CD4-positive, alpha-beta memory T cell (primary cell): ENCODE measurements at regions of chr5 and their contacts with region 1.

Region 1: DNA sequence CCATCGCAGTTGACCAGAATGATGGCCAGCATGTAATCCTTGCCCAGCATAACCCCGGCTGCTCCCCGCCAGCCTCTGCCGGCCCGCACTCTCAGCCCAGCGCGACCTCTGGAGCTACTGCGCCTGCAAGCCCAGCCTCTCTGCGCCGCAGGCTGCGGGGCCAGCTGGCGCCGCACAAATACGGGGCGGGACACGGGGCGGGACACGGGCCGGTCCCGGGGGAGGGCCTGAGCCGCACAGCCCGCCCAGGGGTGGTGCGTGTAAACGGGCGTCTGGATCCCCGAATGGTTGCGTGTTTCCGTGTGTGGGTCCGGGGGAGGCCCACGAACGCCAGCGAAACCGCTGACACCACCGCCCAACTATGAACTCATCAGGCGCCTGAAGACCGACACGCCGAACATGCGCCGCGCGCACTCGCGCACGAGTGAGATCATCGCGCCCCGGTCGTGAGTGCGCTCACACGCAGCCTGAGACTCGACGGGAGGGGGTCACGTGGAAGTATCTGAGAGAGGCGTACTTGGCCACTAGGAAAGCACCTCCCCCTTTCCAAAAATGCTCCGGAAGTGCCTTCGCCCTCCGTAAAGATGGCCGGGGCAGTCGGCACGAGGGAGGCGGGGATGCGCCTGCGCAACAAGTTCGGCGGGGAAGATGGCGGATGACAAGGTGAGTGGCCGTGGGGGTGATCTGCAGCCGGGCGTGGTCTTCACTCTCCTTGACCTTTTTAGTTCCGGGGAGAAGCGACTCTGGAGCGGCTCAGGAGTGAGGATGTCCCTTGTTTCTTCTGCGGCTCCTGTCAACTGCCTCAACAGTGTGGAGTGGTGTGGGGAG is at the starts of genes APBB3 and SLC35A4:
- DNase-seq: peak; percentile 97 to 100 (median 99)
- H3K4me3 ChIP-seq: peak within 1 kb of the TSS; percentile 85
- H3K4me3 Mint-ChIP-seq: peak within 1 kb of the TSS; percentile 91 to 99 (median 95)
- H3K27ac ChIP-seq: peak within 1 kb of the TSS; percentile 91
- H3K27ac Mint-ChIP-seq: peak within 1 kb of the TSS; percentile 91 to 100 (median 98)
- H3K4me1 ChIP-seq: peaks cover 42% of the 10 kb centered on the region
- H3K4me1 Mint-ChIP-seq: peaks cover 34 to 66% (median 53%) of the 10 kb centered on the region in 4 donors
- H3K27me3 ChIP-seq: no peaks in the 10 kb centered on the region
- H3K27me3 Mint-ChIP-seq: no peaks in the 10 kb centered on the region
- total RNA-seq, gene APBB3: 72.9 to 75.4 TPM
- total RNA-seq, gene SLC35A4: 49.0 to 59.4 TPM

Region 2: GRCh38 chr5:139593716-139594319 is 970.6 kb before region 1 on chr5:
- CTCF ChIA-PET with region 1: no interaction called
- POLR2A ChIA-PET with region 1: no interaction called
- intact Hi-C with region 1: no loop called
- DNase-seq: no peak
- H3K4me3 ChIP-seq: no peak overlapping the region
- H3K4me3 Mint-ChIP-seq: no peak overlapping the region
- H3K27ac ChIP-seq: no peak overlapping the region
- H3K27ac Mint-ChIP-seq: peak overlapping the region in 2 of 7 donors; percentile 27 to 32
- H3K4me1 ChIP-seq: peaks cover 47% of the 10 kb centered on the region
- H3K4me1 Mint-ChIP-seq: peaks cover 21 to 70% (median 41%) of the 10 kb centered on the region in 4 donors
- H3K27me3 ChIP-seq: no peaks in the 10 kb centered on the region
- H3K27me3 Mint-ChIP-seq: no peaks in the 10 kb centered on the region

Region 3: DNA sequence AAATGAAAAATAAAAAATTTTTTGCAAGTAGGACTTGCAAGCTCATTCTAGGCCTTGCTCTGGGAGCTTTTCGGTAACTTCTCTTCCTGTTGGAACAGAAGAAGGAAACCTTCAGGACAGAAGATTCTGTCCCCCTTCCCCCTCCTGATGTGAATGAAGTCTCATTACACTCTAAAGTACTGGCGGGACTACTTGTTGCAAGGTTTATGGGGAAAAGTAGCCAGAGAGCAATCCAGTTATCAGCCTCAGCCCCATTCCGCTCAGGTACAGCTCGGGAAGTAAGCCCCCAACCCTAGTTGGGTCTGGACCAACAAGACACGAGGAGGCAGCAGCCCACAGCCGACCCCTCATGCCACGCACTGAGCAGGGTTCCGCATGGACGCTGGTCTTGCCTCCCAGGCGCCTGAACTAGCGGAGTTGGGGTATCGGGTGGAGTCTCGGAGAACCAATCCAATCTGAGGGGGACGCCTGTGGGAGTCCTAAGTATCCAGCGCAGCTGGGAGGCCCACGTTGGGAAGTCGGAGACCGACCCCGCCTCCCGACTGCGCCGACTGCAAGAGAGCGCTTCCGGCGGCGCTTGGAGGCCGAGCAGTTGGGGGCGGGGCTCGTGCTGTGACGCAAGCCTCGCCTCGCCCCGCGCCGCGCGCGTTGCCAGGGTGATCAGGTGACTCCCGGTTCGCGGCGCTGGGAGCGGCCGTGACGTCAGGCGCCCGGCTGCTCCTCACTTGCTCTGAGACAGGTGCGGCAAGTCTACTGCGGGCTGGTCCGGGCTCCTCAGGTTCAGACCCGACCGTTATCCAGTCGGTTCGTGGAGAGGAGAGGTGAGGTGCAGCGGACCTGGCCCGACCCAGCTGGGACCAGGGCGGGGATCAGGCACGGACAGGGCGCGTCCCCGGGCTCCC is 389.7 kb before region 1 on chr5 and contains the start of gene CYSTM1:
- CTCF ChIA-PET with region 1: no interaction called
- POLR2A ChIA-PET with region 1: no interaction called
- intact Hi-C with region 1: loop called (anchors 2 kb)
- DNase-seq: peak; percentile 94 to 98 (median 97)
- H3K4me3 ChIP-seq: peak within 1 kb of the TSS; percentile 74 to 77
- H3K4me3 Mint-ChIP-seq: peak within 1 kb of the TSS; percentile 91 to 97 (median 93)
- H3K27ac ChIP-seq: peak within 1 kb of the TSS; percentile 89
- H3K27ac Mint-ChIP-seq: peak within 1 kb of the TSS; percentile 92 to 99 (median 98)
- H3K4me1 ChIP-seq: peaks cover 12% of the 10 kb centered on the region
- H3K4me1 Mint-ChIP-seq: peaks cover 7 to 23% (median 11%) of the 10 kb centered on the region in 4 donors
- H3K27me3 ChIP-seq: no peaks in the 10 kb centered on the region
- H3K27me3 Mint-ChIP-seq: no peaks in the 10 kb centered on the region
- total RNA-seq, gene CYSTM1: 5.0 to 6.3 TPM

Region 4: DNA sequence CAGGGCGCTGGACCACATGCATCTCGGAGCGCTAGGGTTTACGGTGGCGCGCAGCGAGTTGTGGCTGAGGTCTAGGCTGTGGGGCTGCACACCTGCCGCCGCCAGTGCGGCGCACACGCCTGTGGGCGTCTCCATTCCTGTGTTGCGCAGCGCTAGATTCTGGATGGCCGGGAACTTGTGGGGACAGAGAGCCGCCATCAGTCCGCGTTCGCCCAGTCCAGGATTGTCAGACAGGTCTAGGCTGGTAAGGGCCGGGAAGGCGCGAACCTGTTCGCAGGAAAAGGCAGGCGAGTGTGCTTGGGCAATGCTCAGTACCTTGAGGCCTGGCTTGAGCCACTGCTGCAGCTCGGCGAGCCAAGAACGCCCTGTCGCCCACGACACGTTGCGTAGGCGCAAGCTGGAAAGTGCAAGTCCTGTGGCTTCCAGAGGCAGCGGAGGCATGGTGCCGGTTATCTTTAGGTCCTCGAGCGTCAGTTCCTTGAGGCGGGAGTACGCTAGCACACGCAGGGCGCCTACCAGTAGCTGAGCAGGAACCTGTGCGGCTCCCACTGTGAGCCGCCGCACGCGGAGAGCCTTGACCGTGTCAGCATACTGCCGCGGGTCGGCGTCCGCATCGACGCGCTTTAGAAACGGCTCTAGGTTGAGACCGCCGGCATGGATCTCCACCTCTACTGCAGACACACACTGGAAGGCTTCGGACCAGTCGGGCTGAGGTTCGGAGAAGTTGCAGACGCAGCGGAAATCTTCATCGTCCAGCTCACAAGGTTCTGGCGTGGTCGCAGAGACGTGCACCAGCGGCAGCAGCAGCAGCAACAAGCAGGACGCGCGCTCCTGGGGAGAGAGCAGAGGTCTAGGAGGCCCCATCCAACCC is 68.0 kb after region 1 on chr5:
- CTCF ChIA-PET with region 1: interaction called, 5 read pairs
- POLR2A ChIA-PET with region 1: interaction called, 19 read pairs
- intact Hi-C with region 1: no loop called
- DNase-seq: peak; percentile 50 to 66 (median 55)
- H3K4me3 ChIP-seq: peak overlapping the region; percentile 61 to 73
- H3K4me3 Mint-ChIP-seq: peak overlapping the region; percentile 90 to 96 (median 90)
- H3K27ac ChIP-seq: peak overlapping the region; percentile 41
- H3K27ac Mint-ChIP-seq: peak overlapping the region; percentile 68 to 93 (median 89)
- H3K4me1 ChIP-seq: peaks cover 13% of the 10 kb centered on the region
- H3K4me1 Mint-ChIP-seq: peaks cover 10 to 30% (median 20%) of the 10 kb centered on the region in 4 donors
- H3K27me3 ChIP-seq: no peaks in the 10 kb centered on the region
- H3K27me3 Mint-ChIP-seq: peaks cover 0 to 2% of the 10 kb centered on the region in 2 donors

Region 5: DNA sequence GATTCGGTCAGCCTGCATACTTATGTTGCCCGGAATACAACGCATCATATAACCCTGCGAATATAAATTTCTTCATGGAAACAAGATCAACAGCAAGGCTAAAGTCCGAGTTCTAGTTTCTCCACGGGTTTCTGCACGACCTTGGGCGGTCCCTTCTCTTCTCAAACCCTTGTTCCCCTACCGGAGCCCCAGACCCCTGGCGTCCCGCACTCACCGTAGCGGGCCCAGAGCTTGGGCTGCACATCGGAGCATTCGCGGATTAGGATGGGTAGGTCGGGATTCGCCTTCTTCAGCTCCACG is 82.6 kb after region 1 on chr5:
- CTCF ChIA-PET with region 1: no interaction called
- POLR2A ChIA-PET with region 1: interaction called, 40 read pairs
- intact Hi-C with region 1: loop called (anchors 1 kb)
- DNase-seq: no peak
- H3K4me3 ChIP-seq: peak overlapping the region; percentile 63 to 92
- H3K4me3 Mint-ChIP-seq: peak overlapping the region; percentile 97 to 100 (median 100)
- H3K27ac ChIP-seq: peak overlapping the region; percentile 92
- H3K27ac Mint-ChIP-seq: peak overlapping the region; percentile 91 to 100 (median 100)
- H3K4me1 ChIP-seq: peaks cover 40% of the 10 kb centered on the region
- H3K4me1 Mint-ChIP-seq: peaks cover 27 to 70% (median 48%) of the 10 kb centered on the region in 4 donors
- H3K27me3 ChIP-seq: no peaks in the 10 kb centered on the region
- H3K27me3 Mint-ChIP-seq: no peaks in the 10 kb centered on the region

Region 6: DNA sequence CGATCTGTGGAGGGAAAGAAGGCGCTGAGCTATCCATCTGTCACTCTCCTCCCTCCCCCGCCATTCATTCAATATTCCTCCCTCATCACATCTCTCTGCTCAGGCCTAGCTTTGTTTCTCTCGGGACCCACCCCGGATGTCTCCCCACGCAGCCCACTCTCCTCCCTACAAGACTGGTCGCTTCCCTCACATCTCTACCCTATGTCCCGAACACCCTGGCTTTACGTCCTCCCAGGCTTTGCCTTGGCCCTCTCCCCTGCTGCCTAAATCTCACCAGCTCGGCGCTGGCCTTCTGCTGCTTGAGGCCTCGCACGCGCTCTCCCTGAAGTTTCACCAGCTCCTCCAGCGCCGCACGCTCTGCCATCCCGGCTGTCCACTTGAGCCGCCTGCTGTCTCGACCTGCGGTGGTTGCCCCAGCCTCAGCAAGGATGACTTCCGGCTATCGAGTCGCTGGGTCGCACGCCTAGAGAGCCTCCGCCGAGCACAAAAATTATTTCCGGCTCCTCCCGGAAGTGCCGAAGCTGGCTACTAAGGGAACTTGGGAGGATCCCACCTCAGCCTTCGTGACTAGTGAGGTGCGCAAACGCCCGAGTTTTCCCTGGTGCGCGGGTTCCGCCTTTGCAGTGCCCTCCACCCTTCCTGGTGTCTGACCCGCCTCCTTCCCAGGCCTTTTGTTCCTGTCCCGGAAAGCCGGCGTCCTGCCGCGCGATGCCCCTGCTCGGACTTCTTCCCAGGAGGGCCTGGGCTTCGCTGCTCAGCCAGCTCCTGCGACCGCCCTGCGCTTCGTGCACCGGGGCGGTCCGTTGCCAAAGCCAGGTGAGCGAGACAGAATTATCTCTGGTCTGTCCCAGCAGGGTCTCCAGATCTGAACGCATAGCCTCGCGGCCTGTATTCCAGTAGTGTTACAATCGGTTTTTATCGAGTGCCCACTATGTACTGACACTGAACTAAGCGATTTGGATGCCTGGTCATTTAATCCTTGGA is 126.8 kb after region 1 on chr5 and contains the starts of genes HARS1 and HARS2:
- CTCF ChIA-PET with region 1: no interaction called
- POLR2A ChIA-PET with region 1: interaction called, 7 read pairs
- intact Hi-C with region 1: loop called (anchors 1 kb)
- DNase-seq: peak; percentile 77 to 89 (median 78)
- H3K4me3 ChIP-seq: peak within 1 kb of the TSS; percentile 91
- H3K4me3 Mint-ChIP-seq: peak within 1 kb of the TSS; percentile 97 to 100 (median 99)
- H3K27ac ChIP-seq: peak within 1 kb of the TSS; percentile 83
- H3K27ac Mint-ChIP-seq: peak within 1 kb of the TSS; percentile 97 to 100 (median 98)
- H3K4me1 ChIP-seq: peaks cover 34% of the 10 kb centered on the region
- H3K4me1 Mint-ChIP-seq: peaks cover 23 to 47% (median 37%) of the 10 kb centered on the region in 4 donors
- H3K27me3 ChIP-seq: no peaks in the 10 kb centered on the region
- H3K27me3 Mint-ChIP-seq: no peaks in the 10 kb centered on the region
- total RNA-seq, gene HARS1: 60.7 to 63.5 TPM
- total RNA-seq, gene HARS2: 61.6 to 67.5 TPM

Region 7: GRCh38 chr5:140710899-140711552 is 146.6 kb after region 1 on chr5:
- CTCF ChIA-PET with region 1: no interaction called
- POLR2A ChIA-PET with region 1: interaction called, 22 read pairs
- intact Hi-C with region 1: no loop called
- DNase-seq: peak; percentile 86 to 95 (median 93)
- H3K4me3 ChIP-seq: peak overlapping the region; percentile 71 to 92
- H3K4me3 Mint-ChIP-seq: peak overlapping the region; percentile 96 to 100 (median 99)
- H3K27ac ChIP-seq: peak overlapping the region; percentile 82
- H3K27ac Mint-ChIP-seq: peak overlapping the region; percentile 97 to 100 (median 99)
- H3K4me1 ChIP-seq: peaks cover 19% of the 10 kb centered on the region
- H3K4me1 Mint-ChIP-seq: peaks cover 15 to 32% (median 23%) of the 10 kb centered on the region in 4 donors
- H3K27me3 ChIP-seq: no peaks in the 10 kb centered on the region
- H3K27me3 Mint-ChIP-seq: peaks cover 0 to 8% of the 10 kb centered on the region in 2 donors